Gastrocnemius medialis (tissue), 4 donors: ENCODE measurements at regions of chr15 and their contacts with region 1.

Region 1: GRCh38 chr15:43239732-43240491 is 19.1 kb upstream of the EPB42 start:
- DNase-seq: no peak
- ATAC-seq: no peak
- H3K4me3 ChIP-seq: no peak overlapping the region
- H3K27ac ChIP-seq: no peak overlapping the region
- H3K4me1 ChIP-seq: peaks cover 18 to 36% of the 10 kb centered on the region in 2 donors
- H3K27me3 ChIP-seq: no peaks in the 10 kb centered on the region
- CTCF ChIP-seq: no peak
- POLR2A ChIP-seq: no peak

Region 2: GRCh38 chr15:42772144-42772543 is 467.8 kb before region 1 on chr15:
- in situ Hi-C with region 1: no loop called
- intact Hi-C with region 1: no loop called
- DNase-seq: peak; percentile 8 to 62
- ATAC-seq: peak in 1 of 2 donors; percentile 82
- H3K4me3 ChIP-seq: no peak overlapping the region
- H3K27ac ChIP-seq: peak overlapping the region in 1 of 4 donors; percentile 14
- H3K4me1 ChIP-seq: peaks cover 6 to 28% of the 10 kb centered on the region in 2 donors
- H3K27me3 ChIP-seq: no peaks in the 10 kb centered on the region
- CTCF ChIP-seq: no peak
- POLR2A ChIP-seq: no peak

Region 3: DNA sequence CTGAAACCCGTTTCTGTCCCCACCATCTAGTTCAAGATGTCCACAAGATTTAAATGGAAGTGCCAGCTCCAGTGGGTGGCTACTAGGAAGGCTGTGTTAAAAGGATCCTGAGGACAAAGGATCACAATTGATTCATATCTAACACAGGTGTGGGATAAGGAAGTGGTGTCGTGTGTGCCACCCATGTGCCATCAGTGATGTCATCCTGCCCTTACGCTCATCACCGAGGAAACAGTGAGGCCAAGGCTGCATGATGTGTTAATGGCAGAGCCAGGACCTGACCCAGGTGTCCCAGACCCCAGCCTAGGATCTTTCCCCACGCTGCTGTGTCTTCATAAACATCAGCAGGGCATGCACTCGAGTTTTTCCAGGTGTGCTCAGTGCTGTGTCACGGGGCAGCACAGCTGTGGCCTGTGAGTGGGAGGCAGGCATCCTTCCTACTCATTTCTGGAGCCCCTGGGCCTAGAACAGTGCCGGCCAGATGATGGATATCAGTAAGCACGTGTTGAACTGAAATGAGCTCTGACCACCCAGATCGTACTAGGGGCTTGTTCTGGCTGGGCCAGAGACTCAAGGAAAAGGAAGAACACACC is 37.4 kb after region 1 on chr15:
- in situ Hi-C with region 1: no loop called
- intact Hi-C with region 1: loop called (anchors 2 kb)
- DNase-seq: no peak
- ATAC-seq: no peak
- H3K4me3 ChIP-seq: no peak overlapping the region
- H3K27ac ChIP-seq: peak overlapping the region; percentile 65 to 85 (median 81)
- H3K4me1 ChIP-seq: peaks cover 46 to 53% of the 10 kb centered on the region in 2 donors
- H3K27me3 ChIP-seq: no peaks in the 10 kb centered on the region
- CTCF ChIP-seq: no peak
- POLR2A ChIP-seq: no peak